Gastrocnemius medialis (tissue), 4 donors: ENCODE measurements at regions of chr16 and their contacts with region 1.

Region 1: GRCh38 chr16:30429678-30430427 is at the start of gene DCTPP1:
- DNase-seq: peak; percentile 96 to 98
- ATAC-seq: peak; percentile 100
- H3K4me3 ChIP-seq: peak within 1 kb of the TSS; percentile 73 to 89 (median 82)
- H3K27ac ChIP-seq: peak within 1 kb of the TSS; percentile 77 to 84 (median 84)
- H3K4me1 ChIP-seq: peaks cover 12 to 13% of the 10 kb centered on the region in 2 donors
- H3K27me3 ChIP-seq: no peaks in the 10 kb centered on the region
- CTCF ChIP-seq: peak; percentile 82 to 89 (median 84)
- POLR2A ChIP-seq: peak; percentile 9 to 50
- total RNA-seq, gene DCTPP1: 11.8 to 32.6 (median 17.8) TPM

Region 2: GRCh38 chr16:30445408-30446202 is 15.8 kb after region 1 on chr16 and contains the start of gene SEPHS2:
- in situ Hi-C with region 1: no loop called
- intact Hi-C with region 1: loop called (anchors 1 kb)
- DNase-seq: peak; percentile 96 to 100
- ATAC-seq: peak; percentile 98
- H3K4me3 ChIP-seq: peak within 1 kb of the TSS; percentile 89 to 100 (median 95)
- H3K27ac ChIP-seq: peak within 1 kb of the TSS; percentile 97 to 100 (median 98)
- H3K4me1 ChIP-seq: peaks cover 20 to 21% of the 10 kb centered on the region in 2 donors
- H3K27me3 ChIP-seq: no peaks in the 10 kb centered on the region
- CTCF ChIP-seq: peak in 4 of 5 experiments; percentile 26 to 64 (median 44)
- POLR2A ChIP-seq: peak; percentile 96
- total RNA-seq, gene SEPHS2: 23.7 to 29.5 (median 27.4) TPM

Region 3: GRCh38 chr16:30526823-30527635 is 97.2 kb after region 1 on chr16:
- in situ Hi-C with region 1: loop called in 3 of 4 experiments (anchors 10 kb)
- intact Hi-C with region 1: loop called (anchors 1 kb)
- DNase-seq: peak; percentile 98
- ATAC-seq: peak; percentile 87 to 91
- H3K4me3 ChIP-seq: peak overlapping the region; percentile 66 to 91 (median 86)
- H3K27ac ChIP-seq: peak overlapping the region; percentile 96 to 100 (median 97)
- H3K4me1 ChIP-seq: peaks cover 19 to 36% of the 10 kb centered on the region in 2 donors
- H3K27me3 ChIP-seq: no peaks in the 10 kb centered on the region
- CTCF ChIP-seq: peak in 4 of 5 experiments; percentile 45 to 62 (median 52)
- POLR2A ChIP-seq: peak; percentile 80 to 88

Region 4: DNA sequence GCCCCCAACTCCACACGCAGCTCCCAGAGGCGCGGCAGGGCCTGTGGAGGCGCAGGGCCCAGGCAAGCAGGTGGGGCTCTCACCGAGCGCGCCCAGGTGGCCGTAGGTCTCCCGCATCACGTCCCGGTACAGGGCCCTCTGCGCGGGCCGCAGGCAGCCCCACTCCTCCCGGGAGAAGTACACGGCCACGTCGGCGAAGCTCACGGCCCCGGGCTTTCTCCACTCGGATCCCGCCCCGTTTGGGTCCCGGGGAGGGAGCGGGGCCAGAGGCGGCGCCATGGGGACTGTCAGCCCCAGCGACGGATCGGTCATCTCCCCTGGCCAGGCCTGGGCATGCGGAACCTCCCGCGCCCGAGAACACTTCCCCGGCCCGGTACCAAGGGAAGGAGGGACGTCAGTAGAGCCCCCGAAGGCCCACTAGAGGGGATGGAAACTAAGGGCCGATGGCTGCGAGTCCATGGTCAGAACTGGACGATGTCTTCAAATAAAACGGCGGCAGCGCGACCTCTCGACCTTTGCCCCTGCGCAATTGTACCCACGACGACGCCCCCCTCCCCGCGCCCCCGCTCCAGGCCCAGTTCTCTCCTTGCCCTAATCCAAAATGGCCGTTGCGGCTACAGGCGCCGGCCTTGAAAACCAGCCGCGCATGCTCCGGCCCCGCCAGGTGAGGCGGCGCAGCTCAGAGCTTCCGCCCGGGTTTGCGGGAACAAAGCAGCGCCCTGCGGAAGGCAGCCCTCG is 104.7 kb after region 1 on chr16 and contains the start of gene ZNF747:
- in situ Hi-C with region 1: loop called in 3 of 4 experiments (anchors 10 kb)
- intact Hi-C with region 1: no loop called
- DNase-seq: peak; percentile 93 to 95
- ATAC-seq: peak; percentile 87 to 91
- H3K4me3 ChIP-seq: peak within 1 kb of the TSS; percentile 65 to 88 (median 82)
- H3K27ac ChIP-seq: peak within 1 kb of the TSS; percentile 90 to 96 (median 94)
- H3K4me1 ChIP-seq: peaks cover 23 to 24% of the 10 kb centered on the region in 2 donors
- H3K27me3 ChIP-seq: no peaks in the 10 kb centered on the region
- CTCF ChIP-seq: peak in 1 of 5 experiments; percentile 6
- POLR2A ChIP-seq: peak; percentile 71 to 74
- total RNA-seq, gene ZNF747: 8.6 to 17.5 (median 13.1) TPM